Keratinocyte (primary cell): ENCODE measurements at regions of chr2 and their contacts with region 1.

Region 1: GRCh38 chr2:172921532-172922236 is 154.0 kb upstream of the MAP3K20 start:
- DNase-seq: no peak
- H3K4me3 ChIP-seq: no peak overlapping the region
- H3K27ac ChIP-seq: no peak overlapping the region
- H3K4me1 ChIP-seq: peaks cover 8% of the 10 kb centered on the region
- H3K27me3 ChIP-seq: no peaks in the 10 kb centered on the region
- CTCF ChIP-seq: no peak

Region 2: DNA sequence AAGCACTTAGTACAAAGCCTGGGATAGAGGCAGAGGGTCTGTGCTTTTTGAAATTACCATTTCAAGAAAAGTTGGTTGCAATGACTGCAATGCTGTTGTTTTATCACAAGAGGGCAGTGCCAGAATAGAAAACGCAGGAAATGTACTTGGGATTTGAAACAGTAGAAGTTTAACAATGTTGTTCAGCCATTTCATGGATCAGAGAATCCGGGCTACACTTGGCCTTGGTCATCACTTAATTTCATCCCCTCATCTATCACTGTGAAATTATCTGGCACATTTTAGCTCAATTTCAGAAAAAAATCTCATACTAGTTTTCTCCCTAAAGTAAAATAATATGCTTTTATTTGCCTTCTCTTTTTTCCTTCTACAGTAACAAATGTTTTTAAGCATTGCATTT is 115.2 kb before region 1 on chr2:
- dilution Hi-C with region 1: loop called (anchors 25 kb)
- DNase-seq: no peak
- H3K4me3 ChIP-seq: peak overlapping the region in 1 of 3 experiments; percentile 15
- H3K27ac ChIP-seq: peak overlapping the region; percentile 19
- H3K4me1 ChIP-seq: peaks cover 14% of the 10 kb centered on the region
- H3K27me3 ChIP-seq: no peaks in the 10 kb centered on the region
- CTCF ChIP-seq: peak; percentile 44 to 90 (median 75)

Region 3: DNA sequence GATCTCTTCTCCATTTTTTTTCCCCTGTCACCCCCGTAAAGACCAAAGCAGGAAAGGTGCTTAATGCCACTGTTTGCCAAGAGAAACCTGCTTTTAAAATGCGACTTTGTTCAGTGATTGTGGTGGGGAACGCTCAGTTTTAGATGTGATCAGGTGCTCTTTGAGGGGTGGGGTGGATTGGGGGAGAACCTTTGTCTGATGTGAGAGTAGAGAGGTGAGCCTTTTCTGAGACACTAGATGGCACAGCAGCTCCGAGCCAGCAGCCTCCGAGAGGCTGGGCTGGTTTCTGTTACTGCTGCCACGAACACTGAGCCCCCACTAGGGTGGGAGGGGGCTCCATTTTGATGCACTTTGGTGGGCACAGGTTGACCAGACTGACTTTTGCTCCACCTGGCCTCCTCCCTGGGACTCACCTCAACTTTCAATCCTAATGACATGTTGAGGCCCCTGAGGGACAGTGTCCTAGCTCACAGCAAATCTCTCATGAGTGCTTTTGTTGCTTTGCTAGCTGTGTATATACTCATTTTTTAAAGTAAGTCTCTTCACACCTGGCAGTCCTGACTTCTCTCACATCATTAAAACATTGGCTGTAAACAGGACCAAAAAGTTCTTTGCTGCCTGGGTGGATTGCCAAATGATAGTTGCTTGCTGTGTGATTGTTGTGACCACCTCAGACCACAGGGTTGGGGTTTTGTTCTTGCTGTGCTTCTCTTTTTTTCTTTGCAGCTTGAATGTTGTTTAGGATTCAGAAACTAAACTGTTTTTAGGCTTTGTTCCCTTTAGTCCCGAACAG is 55.8 kb after region 1 on chr2:
- dilution Hi-C with region 1: no loop called
- DNase-seq: no peak
- H3K4me3 ChIP-seq: no peak overlapping the region
- H3K27ac ChIP-seq: no peak overlapping the region
- H3K4me1 ChIP-seq: no peaks in the 10 kb centered on the region
- H3K27me3 ChIP-seq: no peaks in the 10 kb centered on the region
- CTCF ChIP-seq: no peak

Region 4: DNA sequence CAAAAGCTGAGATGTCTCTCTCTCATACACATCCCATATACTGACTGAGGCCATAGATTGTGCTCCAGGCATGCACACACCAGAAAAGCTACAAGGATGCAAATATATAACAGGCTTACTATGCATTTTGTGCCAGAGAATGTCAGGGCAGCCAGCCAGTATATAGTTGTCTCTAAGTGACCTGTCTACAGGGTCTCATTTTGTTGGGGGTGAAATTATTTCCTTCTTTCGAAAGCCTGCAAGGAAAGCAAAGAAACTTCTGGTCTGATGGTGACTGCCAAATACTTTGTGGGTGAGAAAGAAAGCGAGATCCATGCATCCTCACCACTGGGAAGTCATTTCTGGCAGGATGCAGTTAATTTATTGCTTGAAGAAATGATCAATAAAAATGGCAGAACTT is 503.2 kb after region 1 on chr2:
- dilution Hi-C with region 1: no loop called
- DNase-seq: no peak
- H3K4me3 ChIP-seq: no peak overlapping the region
- H3K27ac ChIP-seq: no peak overlapping the region
- H3K4me1 ChIP-seq: peaks cover 23% of the 10 kb centered on the region
- H3K27me3 ChIP-seq: peaks cover 4% of the 10 kb centered on the region
- CTCF ChIP-seq: no peak